ENCODE measurements at regions of chr1 and their contacts with region 1.

Region 1: DNA sequence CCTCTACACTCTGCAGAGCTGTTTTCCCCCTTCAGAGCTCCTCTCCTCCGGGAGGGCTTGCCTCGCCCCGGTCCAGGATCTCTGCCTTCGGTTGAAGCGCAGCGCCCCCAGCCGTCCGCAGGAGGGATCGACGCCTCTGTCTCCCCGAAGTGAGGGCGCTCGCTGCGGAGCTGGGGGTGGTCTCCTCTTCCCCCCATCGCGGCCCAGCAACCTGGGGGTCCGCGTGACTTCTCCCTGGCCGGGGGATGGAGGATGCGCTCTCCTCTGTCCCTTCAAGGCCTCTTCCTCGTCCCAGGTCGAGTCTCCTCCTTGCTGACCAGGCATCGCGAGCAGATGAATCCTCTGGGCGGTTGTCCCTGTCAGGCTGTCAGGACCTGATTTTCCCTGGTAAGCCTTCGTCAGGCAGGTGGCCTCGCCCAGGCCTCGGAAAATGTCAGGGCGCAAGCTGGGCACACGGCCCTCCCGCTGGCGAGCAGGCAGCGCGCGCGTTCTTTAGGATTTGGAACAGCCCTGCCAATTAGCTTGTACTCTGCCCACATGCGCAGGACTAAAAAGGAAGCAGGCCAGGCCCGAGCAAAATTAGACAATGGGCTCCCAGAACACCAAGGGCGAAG is 90.5 kb downstream of the EDEM3 start:
- DNase-seq: peak; percentile 75 to 91 (median 81)
- ATAC-seq: peak; percentile 89 to 96 (median 94)
- H3K4me3 ChIP-seq: peak overlapping the region in 11 of 12 donors; percentile 6 to 60 (median 47)
- H3K27ac ChIP-seq: peak overlapping the region in 5 of 12 donors; percentile 19 to 58 (median 52)
- H3K4me1 ChIP-seq: peaks cover 0 to 13% (median 10%) of the 10 kb centered on the region in 12 donors
- H3K27me3 ChIP-seq: no peaks in the 10 kb centered on the region
- CTCF ChIP-seq: peak; percentile 89 to 98 (median 96)
- POLR2A ChIP-seq: no peak

Region 2: DNA sequence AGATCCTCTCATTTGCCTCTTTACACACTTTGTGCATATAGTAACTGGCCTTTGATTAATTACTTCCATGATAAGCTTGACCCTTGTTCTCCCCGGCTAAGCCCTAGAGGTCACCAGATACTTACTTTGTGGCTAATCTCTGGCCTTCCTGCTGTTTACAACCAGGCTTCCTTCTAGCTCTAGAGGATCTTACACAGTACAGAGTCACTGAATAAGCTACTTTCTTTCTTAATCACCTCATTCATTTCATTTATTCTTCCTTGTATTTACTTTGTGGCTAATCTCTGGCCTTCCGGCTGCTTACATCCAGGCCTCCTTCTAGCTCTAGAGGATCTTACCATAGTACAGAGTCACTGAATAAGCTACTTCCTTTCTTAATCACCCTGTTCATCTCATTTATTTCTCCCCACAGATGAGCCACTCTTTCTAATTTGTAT is 421.6 kb before region 1 on chr1:
- intact Hi-C with region 1: loop called (anchors 2 to 10 kb)
- DNase-seq: peak in 1 of 5 donors; percentile 19
- ATAC-seq: peak; percentile 82 to 92 (median 86)
- H3K4me3 ChIP-seq: no peak overlapping the region
- H3K27ac ChIP-seq: peak overlapping the region in 3 of 12 donors; percentile 24 to 59 (median 35)
- H3K4me1 ChIP-seq: peaks cover 0 to 20% (median 4%) of the 10 kb centered on the region in 12 donors
- H3K27me3 ChIP-seq: no peaks in the 10 kb centered on the region
- CTCF ChIP-seq: peak; percentile 0 to 66 (median 49)
- POLR2A ChIP-seq: no peak

Region 3: DNA sequence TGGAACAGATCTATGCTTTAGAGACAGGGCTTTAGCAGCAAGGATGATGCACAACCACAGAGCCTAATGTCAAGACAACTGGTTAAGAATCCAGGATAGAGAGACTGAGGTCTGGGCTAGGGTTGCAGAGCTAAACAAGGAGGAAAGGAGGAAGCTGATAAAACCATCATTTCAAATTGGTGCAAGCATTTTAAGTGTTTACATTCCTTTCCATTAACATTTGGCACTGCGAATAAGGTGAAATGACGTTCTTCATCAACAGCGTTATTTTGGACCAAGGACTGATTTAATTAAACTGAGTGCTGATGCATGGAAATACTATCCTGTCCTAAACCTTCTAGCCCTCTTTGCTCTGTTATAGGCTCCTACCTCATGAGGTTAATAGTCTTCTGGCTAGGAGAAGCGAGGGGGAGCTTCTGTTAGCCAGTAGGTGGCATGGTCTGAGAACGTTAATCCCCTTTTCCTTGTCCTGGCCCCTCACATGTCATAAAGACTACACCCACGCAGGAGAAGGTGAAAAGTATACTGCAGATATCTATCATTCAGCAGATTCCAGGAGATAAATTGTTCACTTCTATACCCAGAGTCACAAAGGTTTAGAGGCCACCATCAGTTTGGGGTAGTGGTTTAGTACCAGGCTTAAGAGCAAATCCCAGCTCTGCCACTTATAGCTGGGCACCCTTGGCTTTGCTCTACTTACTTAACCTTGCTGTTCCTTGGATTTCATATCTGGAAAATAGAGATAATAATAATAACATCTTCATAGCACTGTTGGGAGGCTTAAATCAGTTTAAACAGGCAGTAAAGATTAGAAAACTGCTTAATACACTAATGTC is 284.8 kb before region 1 on chr1:
- intact Hi-C with region 1: loop called in 3 of 10 experiments (anchors 10 kb)
- DNase-seq: no peak
- ATAC-seq: peak; percentile 51 to 62 (median 56)
- H3K4me3 ChIP-seq: no peak overlapping the region
- H3K27ac ChIP-seq: no peak overlapping the region
- H3K4me1 ChIP-seq: peaks cover 0 to 8% (median 0%) of the 10 kb centered on the region in 12 donors
- H3K27me3 ChIP-seq: no peaks in the 10 kb centered on the region
- CTCF ChIP-seq: peak in 10 of 12 donors; percentile 17 to 48 (median 32)
- POLR2A ChIP-seq: no peak

Region 4: DNA sequence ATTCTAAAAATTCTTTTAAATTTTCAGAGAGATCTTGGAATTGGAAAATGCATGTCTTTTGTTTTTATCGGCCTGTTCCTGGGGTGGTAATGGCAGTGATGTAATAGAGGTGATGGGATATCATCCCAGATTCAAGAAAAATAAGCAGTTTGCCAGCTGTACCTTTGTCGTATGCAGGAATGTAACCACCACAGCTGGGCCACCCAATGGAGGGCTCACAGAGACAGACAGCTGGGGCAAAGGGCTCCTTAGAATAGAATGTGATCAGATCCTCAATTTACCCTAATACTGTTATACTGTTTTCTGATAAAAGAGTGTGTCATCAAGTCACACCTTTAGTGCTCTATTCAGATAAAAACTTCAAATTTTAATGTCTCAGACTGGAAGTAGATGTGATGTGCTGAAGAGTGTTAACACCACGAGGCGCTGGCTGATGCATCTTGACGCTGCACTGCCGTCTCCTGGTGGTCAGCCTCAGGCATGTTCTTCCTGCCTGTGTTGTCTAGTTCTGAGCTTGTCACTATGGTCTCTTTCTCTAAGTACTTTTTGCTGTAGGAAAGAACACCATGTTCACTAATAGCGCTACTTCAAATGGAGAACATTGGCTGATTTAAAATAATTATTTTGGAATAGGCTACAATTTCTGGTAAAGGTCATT is 198.5 kb before region 1 on chr1:
- intact Hi-C with region 1: loop called in 1 of 10 experiments (anchors 10 kb)
- DNase-seq: peak in 2 of 5 donors; percentile 60 to 66
- ATAC-seq: peak; percentile 65 to 84 (median 74)
- H3K4me3 ChIP-seq: no peak overlapping the region
- H3K27ac ChIP-seq: peak overlapping the region in 5 of 12 donors; percentile 23 to 59 (median 45)
- H3K4me1 ChIP-seq: peaks cover 2 to 66% (median 34%) of the 10 kb centered on the region in 12 donors
- H3K27me3 ChIP-seq: no peaks in the 10 kb centered on the region
- CTCF ChIP-seq: peak in 11 of 12 donors; percentile 6 to 58 (median 39)
- POLR2A ChIP-seq: no peak

Region 5: DNA sequence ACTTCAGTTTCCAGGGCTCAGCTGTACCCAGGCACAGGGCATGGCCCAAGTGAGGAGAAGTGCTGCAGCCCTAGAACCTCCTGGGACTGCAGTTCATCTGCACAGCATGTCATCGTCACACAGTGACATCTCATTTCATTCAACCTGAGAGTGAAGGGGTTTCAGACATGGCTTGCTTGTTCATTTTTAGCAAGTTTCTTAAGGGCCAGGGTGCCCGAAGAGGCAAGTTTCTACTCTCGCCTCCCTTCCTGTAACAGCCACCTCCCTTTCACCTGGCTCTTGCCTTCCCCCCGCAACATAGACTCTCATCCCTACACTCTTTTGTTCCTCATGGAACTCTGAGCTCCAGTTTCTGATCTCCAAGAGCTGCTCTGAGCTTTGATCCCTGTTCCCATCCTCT is 169.2 kb before region 1 on chr1:
- intact Hi-C with region 1: loop called in 3 of 10 experiments (anchors 5 to 10 kb)
- DNase-seq: no peak
- ATAC-seq: no peak
- H3K4me3 ChIP-seq: no peak overlapping the region
- H3K27ac ChIP-seq: peak overlapping the region in 9 of 12 donors; percentile 65 to 88 (median 83)
- H3K4me1 ChIP-seq: peaks cover 0 to 88% (median 60%) of the 10 kb centered on the region in 12 donors
- H3K27me3 ChIP-seq: no peaks in the 10 kb centered on the region
- CTCF ChIP-seq: no peak
- POLR2A ChIP-seq: no peak

Region 6: GRCh38 chr1:184577319-184577718 is 86.8 kb before region 1 on chr1:
- intact Hi-C with region 1: loop called in 1 of 10 experiments (anchors 5 kb)
- DNase-seq: no peak
- ATAC-seq: peak in 2 of 4 donors; percentile 22 to 34
- H3K4me3 ChIP-seq: no peak overlapping the region
- H3K27ac ChIP-seq: peak overlapping the region in 6 of 12 donors; percentile 26 to 64 (median 36)
- H3K4me1 ChIP-seq: peaks cover 0 to 18% (median 3%) of the 10 kb centered on the region in 12 donors
- H3K27me3 ChIP-seq: no peaks in the 10 kb centered on the region
- CTCF ChIP-seq: no peak
- POLR2A ChIP-seq: no peak

Measured in heart left ventricle (tissue), 16 donors.